ENCODE measurements at regions of chr10 and their contacts with region 1.

Region 1: GRCh38 chr10:102764389-102765178 is 20.8 kb downstream of the WBP1L start:
- DNase-seq: no peak
- ATAC-seq: peak in 2 of 4 donors; percentile 27 to 29
- H3K4me3 ChIP-seq: no peak overlapping the region
- H3K27ac ChIP-seq: no peak overlapping the region
- H3K4me1 ChIP-seq: peaks cover 19% of the 10 kb centered on the region
- H3K27me3 ChIP-seq: no peaks in the 10 kb centered on the region
- CTCF ChIP-seq: no peak

Region 2: GRCh38 chr10:102796407-102797176 is 32.0 kb after region 1 on chr10:
- intact Hi-C with region 1: no loop called
- DNase-seq: peak; percentile 89 to 94
- ATAC-seq: peak; percentile 83 to 93 (median 88)
- H3K4me3 ChIP-seq: peak overlapping the region; percentile 43
- H3K27ac ChIP-seq: peak overlapping the region; percentile 87
- H3K4me1 ChIP-seq: peaks cover 79% of the 10 kb centered on the region
- H3K27me3 ChIP-seq: no peaks in the 10 kb centered on the region
- CTCF ChIP-seq: no peak

Region 3: DNA sequence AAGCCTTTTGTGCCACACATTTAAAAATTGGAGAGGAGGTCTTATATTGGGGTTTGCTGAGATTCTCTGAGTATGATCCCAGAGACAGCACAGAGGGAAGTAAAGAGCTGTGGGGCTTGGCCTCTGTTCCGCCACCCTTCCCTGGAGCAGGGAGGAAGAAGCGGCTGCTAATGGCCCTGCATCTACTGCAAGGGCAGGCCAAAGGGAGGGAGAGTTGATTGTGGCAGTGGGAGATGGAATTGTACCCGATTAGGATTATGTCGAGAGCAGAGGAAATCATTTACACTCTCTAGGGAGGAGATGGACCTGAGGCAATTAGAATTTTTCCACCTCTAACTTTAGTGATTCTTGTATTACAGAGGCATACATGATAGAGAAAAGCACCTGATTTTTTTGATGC is 43.8 kb after region 1 on chr10:
- intact Hi-C with region 1: loop called (anchors 5 kb)
- DNase-seq: no peak
- ATAC-seq: no peak
- H3K4me3 ChIP-seq: no peak overlapping the region
- H3K27ac ChIP-seq: no peak overlapping the region
- H3K4me1 ChIP-seq: peaks cover 30% of the 10 kb centered on the region
- H3K27me3 ChIP-seq: no peaks in the 10 kb centered on the region
- CTCF ChIP-seq: no peak

Region 4: GRCh38 chr10:102815790-102816549 is 51.4 kb after region 1 on chr10:
- intact Hi-C with region 1: loop called in 1 of 2 experiments (anchors 5 kb)
- DNase-seq: no peak
- ATAC-seq: peak; percentile 33 to 44 (median 38)
- H3K4me3 ChIP-seq: no peak overlapping the region
- H3K27ac ChIP-seq: peak overlapping the region; percentile 89
- H3K4me1 ChIP-seq: peaks cover 42% of the 10 kb centered on the region
- H3K27me3 ChIP-seq: no peaks in the 10 kb centered on the region
- CTCF ChIP-seq: no peak